Posterior cingulate gyrus (tissue), 11 donors: ENCODE measurements at regions of chr1 and their contacts with region 1.

Region 1: DNA sequence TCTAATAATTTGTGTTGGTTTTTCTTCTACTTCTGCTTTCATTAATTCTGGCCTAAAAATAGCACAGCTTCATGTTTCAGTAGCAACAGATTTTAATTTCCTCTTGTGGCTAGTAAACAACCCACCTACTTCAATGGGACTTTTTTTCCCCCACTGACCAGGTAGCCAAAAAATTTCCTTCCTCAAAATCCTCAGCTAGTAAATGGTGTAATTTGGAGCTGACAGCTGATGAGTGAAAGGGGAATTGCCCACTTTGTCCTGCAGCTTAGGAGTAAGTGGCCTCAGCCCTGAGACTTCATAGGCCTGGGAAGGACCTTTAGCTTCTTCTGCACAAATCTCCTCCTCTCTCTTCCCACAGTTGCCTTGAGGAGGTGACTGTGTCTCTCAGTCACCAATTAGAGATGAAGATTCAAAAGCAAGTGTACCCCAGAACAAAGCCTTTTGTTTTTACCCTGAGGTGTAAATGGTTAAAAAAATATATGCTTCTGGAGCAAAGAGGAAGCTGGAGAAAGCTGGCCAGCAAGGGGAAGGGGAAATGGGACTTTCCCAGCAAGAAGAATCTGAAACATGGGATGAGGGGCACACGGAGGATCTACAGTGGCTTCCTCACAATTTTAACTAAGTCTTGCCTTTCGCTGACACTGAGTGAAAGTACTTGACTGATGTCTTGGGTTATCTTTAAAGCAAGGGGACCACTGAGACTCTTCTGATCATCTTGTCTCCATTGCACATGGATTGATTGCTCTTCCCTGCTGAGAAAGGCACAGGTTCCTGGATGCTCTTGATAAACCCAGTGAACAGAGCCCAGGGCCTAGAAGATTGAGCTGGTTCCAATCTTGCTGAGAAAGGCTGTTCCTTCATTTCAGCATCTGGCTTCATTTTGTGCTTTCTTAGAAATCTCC is 35.8 kb upstream of the VCAM1 start:
- DNase-seq: no peak

Region 2: GRCh38 chr1:100706827-100707226 is 23.1 kb after region 1 on chr1:
- intact Hi-C with region 1: loop called (anchors 2 kb)
- DNase-seq: no peak